HCT116 (cell line): ENCODE measurements at regions of chr9 and their contacts with region 1.

Region 1: GRCh38 chr9:80282766-80283165 is 711.0 kb downstream of the TLE4 start:
- DNase-seq: no peak
- ATAC-seq: no peak
- H3K4me3 ChIP-seq: no peak overlapping the region
- H3K27ac ChIP-seq: no peak overlapping the region
- H3K4me1 ChIP-seq: no peaks in the 10 kb centered on the region
- H3K27me3 ChIP-seq: no peaks in the 10 kb centered on the region
- CTCF ChIP-seq: no peak
- POLR2A ChIP-seq: no peak
- RAD21 ChIP-seq: no peak

Region 2: GRCh38 chr9:80218328-80218727 is 64.4 kb before region 1 on chr9:
- CTCF ChIA-PET with region 1: no interaction called
- POLR2A ChIA-PET with region 1: no interaction called
- RAD21 ChIA-PET with region 1: no interaction called
- intact Hi-C with region 1: loop called (anchors 10 kb)
- DNase-seq: no peak
- ATAC-seq: no peak
- H3K4me3 ChIP-seq: no peak overlapping the region
- H3K27ac ChIP-seq: no peak overlapping the region
- H3K4me1 ChIP-seq: no peaks in the 10 kb centered on the region
- H3K27me3 ChIP-seq: no peaks in the 10 kb centered on the region
- CTCF ChIP-seq: no peak
- POLR2A ChIP-seq: no peak
- RAD21 ChIP-seq: no peak